Ovary (tissue), 10 donors: ENCODE measurements at regions of chr3 and their contacts with region 1.

Region 1: DNA sequence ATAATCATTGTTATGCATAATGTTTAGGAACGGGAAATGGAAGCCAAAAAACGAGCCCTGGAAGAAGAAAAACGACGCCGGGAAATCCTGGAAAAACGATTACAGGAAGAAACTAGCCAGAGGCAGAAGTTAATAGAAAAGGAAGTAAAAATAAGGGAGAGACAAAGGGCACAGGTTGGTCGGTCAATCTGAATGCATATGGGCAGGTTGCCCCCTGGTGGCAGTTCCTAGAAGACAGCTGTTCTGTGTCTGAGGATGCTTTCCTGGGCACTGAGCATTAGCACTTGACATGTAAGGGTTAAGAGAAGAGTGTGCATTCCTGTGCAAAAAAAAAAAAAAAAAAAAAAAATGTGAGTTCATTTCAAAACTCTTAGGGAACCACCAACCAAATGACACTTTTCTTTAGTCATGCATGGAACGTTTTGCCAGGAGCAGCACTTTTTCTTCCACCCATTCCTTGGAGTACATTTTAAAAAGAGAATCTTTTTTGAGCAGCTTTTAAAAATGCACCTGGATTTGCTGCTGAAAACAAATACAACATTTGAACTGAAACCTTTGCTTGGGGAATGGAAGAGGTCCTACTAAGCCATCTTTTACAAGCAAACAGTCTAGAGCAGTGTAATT is 11.1 kb upstream of the ABHD10 start:
- DNase-seq: peak; percentile 71 to 87 (median 86)
- H3K4me3 ChIP-seq: no peak overlapping the region
- H3K27ac ChIP-seq: no peak overlapping the region
- H3K4me1 ChIP-seq: peaks cover 9% of the 10 kb centered on the region
- H3K27me3 ChIP-seq: no peaks in the 10 kb centered on the region
- CTCF ChIP-seq: peak; percentile 35 to 87 (median 80)
- EP300 ChIP-seq: no peak
- POLR2A ChIP-seq: no peak

Region 2: GRCh38 chr3:111717601-111718000 is 250.2 kb before region 1 on chr3:
- intact Hi-C with region 1: loop called (anchors 2 to 5 kb)
- DNase-seq: peak; percentile 62 to 86 (median 71)
- H3K4me3 ChIP-seq: no peak overlapping the region
- H3K27ac ChIP-seq: no peak overlapping the region
- H3K4me1 ChIP-seq: no peaks in the 10 kb centered on the region
- H3K27me3 ChIP-seq: no peaks in the 10 kb centered on the region
- CTCF ChIP-seq: peak; percentile 75 to 97 (median 95)
- EP300 ChIP-seq: no peak
- POLR2A ChIP-seq: no peak

Region 3: DNA sequence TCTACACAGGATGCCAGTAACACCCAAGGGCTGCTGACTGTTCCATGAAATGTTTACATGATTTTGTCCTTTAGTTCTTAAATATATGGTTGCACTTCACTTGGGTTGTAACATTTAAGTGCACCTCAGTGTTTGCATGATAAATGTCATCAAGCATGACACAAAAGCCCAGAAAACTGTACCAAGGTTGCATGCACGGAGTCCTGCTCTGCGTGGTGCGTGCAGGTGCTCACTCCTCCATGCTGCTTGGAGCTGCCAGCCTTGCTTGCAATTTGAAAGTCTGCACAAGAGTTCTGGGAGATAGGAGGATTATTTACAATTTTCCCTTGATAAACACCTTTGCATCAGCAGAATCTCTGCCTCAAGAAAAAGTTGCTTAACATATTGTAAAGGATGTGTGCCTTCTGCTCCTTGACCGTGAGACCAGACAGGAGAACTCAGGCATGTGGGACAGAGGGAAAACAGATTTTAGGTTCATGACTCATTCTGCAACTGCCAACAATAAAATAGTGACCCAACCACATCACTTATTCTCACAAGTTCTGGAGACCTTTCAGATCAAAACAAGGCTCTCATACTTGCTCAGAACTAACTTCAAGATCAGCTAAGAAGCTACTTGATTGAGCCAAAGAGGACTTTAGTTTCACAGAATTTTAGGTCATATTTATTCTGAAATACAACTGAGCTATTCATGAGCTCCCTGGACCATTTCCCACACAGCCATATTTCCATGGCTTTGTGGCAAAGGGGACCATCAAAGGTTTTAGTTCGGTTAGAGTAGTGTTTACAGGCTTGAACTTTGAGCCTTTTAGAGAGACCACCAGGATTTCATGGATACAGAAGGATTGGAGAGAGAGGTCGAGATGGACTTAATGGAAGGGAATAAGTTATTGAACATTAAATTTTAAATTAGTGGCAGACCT is 244.2 kb before region 1 on chr3:
- intact Hi-C with region 1: loop called in 2 of 4 experiments (anchors 5 kb)
- DNase-seq: no peak
- H3K4me3 ChIP-seq: no peak overlapping the region
- H3K27ac ChIP-seq: no peak overlapping the region
- H3K4me1 ChIP-seq: peaks cover 3% of the 10 kb centered on the region
- H3K27me3 ChIP-seq: no peaks in the 10 kb centered on the region
- CTCF ChIP-seq: no peak
- EP300 ChIP-seq: no peak
- POLR2A ChIP-seq: no peak